Naive thymus-derived CD4-positive, alpha-beta T cell (primary cell): ENCODE measurements at regions of chr10 and their contacts with region 1.

Region 1: GRCh38 chr10:128069351-128070051 is 56.7 kb downstream of the MKI67 start:
- DNase-seq: peak; percentile 56 to 81 (median 76)
- ATAC-seq: peak; percentile 66
- H3K4me3 ChIP-seq: no peak overlapping the region
- H3K4me3 Mint-ChIP-seq: no peak overlapping the region
- H3K27ac ChIP-seq: no peak overlapping the region
- H3K27ac Mint-ChIP-seq: peak overlapping the region in 4 of 9 donors; percentile 45 to 65 (median 54)
- H3K4me1 ChIP-seq: peaks cover 16 to 19% of the 10 kb centered on the region in 2 donors
- H3K4me1 Mint-ChIP-seq: peaks cover 31 to 50% (median 37%) of the 10 kb centered on the region in 7 donors
- H3K27me3 ChIP-seq: no peaks in the 10 kb centered on the region
- H3K27me3 Mint-ChIP-seq: no peaks in the 10 kb centered on the region

Region 2: GRCh38 chr10:127834221-127834620 is 235.3 kb before region 1 on chr10:
- CTCF ChIA-PET with region 1: no interaction called
- POLR2A ChIA-PET with region 1: no interaction called
- intact Hi-C with region 1: no loop called
- DNase-seq: no peak
- ATAC-seq: no peak
- H3K4me3 ChIP-seq: no peak overlapping the region
- H3K4me3 Mint-ChIP-seq: no peak overlapping the region
- H3K27ac ChIP-seq: no peak overlapping the region
- H3K27ac Mint-ChIP-seq: no peak overlapping the region
- H3K4me1 ChIP-seq: no peaks in the 10 kb centered on the region
- H3K4me1 Mint-ChIP-seq: no peaks in the 10 kb centered on the region
- H3K27me3 ChIP-seq: no peaks in the 10 kb centered on the region
- H3K27me3 Mint-ChIP-seq: peaks cover 3 to 31% (median 23%) of the 10 kb centered on the region in 5 donors

Region 3: DNA sequence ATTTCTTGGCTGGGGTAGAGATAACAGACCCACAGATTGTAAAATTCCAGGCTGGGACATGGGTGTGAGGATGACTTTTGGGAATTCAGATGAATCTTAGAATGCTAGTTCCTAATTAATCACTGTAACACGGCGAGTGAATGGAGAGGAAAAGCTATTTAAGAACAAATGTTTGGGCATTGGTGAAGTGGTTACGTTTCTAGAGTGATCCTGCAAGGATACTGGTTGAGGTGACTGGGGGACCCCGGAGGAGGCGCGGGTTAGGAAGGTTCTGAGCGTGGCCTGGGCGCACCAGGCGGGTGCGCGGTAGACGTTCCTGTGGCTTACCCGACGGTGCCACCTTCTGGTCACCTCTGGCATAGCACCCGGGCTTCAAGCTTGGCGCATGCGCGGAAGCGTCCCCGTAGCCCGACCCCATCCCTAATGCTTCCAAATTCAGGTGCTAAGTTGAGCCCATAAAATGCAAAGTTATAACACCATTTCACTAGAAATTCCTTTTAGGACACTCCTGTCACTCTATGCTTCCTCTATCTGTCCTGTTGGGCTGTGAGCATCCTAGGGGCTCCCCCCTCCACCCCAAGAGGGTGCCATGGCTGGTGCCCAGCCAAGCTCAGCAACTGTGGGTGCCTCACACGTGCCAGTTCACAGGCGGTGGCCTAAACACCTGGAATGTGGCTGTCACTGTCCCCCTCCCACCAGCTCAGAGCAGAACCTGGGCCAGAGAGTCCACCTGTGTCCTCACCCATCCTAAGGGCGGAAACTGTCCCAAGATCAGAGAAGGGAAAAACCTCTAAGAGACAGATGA is 58.1 kb before region 1 on chr10:
- CTCF ChIA-PET with region 1: interaction called, 6 read pairs
- POLR2A ChIA-PET with region 1: no interaction called
- intact Hi-C with region 1: loop called (anchors 1 kb)
- DNase-seq: peak; percentile 72 to 97 (median 88)
- ATAC-seq: peak; percentile 100
- H3K4me3 ChIP-seq: no peak overlapping the region
- H3K4me3 Mint-ChIP-seq: peak overlapping the region in 8 of 10 donors; percentile 2 to 62 (median 31)
- H3K27ac ChIP-seq: no peak overlapping the region
- H3K27ac Mint-ChIP-seq: peak overlapping the region in 3 of 9 donors; percentile 27 to 62 (median 48)
- H3K4me1 ChIP-seq: no peaks in the 10 kb centered on the region
- H3K4me1 Mint-ChIP-seq: peaks cover 0 to 8% (median 6%) of the 10 kb centered on the region in 7 donors
- H3K27me3 ChIP-seq: no peaks in the 10 kb centered on the region
- H3K27me3 Mint-ChIP-seq: peaks cover 0 to 5% (median 0%) of the 10 kb centered on the region in 5 donors

Region 4: GRCh38 chr10:128047351-128047750 is 22.1 kb before region 1 on chr10:
- CTCF ChIA-PET with region 1: interaction called, 17 read pairs
- POLR2A ChIA-PET with region 1: interaction called, 78 read pairs
- intact Hi-C with region 1: loop called (anchors 1 kb)
- DNase-seq: peak; percentile 57 to 84 (median 80)
- ATAC-seq: peak; percentile 96
- H3K4me3 ChIP-seq: peak overlapping the region; percentile 60
- H3K4me3 Mint-ChIP-seq: peak overlapping the region; percentile 88 to 98 (median 96)
- H3K27ac ChIP-seq: peak overlapping the region; percentile 82
- H3K27ac Mint-ChIP-seq: peak overlapping the region; percentile 77 to 98 (median 95)
- H3K4me1 ChIP-seq: peaks cover 28 to 37% of the 10 kb centered on the region in 2 donors
- H3K4me1 Mint-ChIP-seq: peaks cover 13 to 72% (median 52%) of the 10 kb centered on the region in 7 donors
- H3K27me3 ChIP-seq: no peaks in the 10 kb centered on the region
- H3K27me3 Mint-ChIP-seq: no peaks in the 10 kb centered on the region

Region 5: DNA sequence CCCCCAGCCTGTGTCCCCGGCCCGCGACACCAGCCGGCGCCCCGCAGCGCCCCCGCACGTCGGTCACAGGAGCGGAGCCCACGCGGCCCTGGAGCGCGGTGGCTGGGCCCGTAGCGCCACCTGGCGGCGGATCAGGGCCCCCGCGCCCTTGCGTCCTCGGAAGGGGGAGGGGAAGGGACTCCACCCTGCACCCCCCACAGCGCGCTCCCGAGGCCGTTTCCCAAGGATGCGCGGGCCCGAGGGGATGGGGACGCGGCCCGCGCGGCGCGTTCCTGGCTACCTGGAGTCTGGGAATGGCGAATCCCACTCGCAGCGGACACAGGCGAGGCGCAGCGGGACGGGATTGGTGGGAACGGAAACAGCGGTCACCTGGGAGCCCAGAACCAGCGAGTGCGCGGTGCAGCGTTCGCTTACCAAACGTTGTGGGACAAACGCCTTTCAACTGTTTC is 80.6 kb after region 1 on chr10:
- CTCF ChIA-PET with region 1: interaction called, 11 read pairs
- POLR2A ChIA-PET with region 1: interaction called, 3 read pairs
- intact Hi-C with region 1: no loop called
- DNase-seq: peak; percentile 71 to 89 (median 83)
- ATAC-seq: peak; percentile 99
- H3K4me3 ChIP-seq: peak overlapping the region; percentile 79
- H3K4me3 Mint-ChIP-seq: peak overlapping the region; percentile 32 to 77 (median 60)
- H3K27ac ChIP-seq: no peak overlapping the region
- H3K27ac Mint-ChIP-seq: peak overlapping the region in 1 of 9 donors; percentile 14
- H3K4me1 ChIP-seq: no peaks in the 10 kb centered on the region
- H3K4me1 Mint-ChIP-seq: peaks cover 0 to 16% (median 3%) of the 10 kb centered on the region in 7 donors
- H3K27me3 ChIP-seq: no peaks in the 10 kb centered on the region
- H3K27me3 Mint-ChIP-seq: peaks cover 0 to 26% (median 0%) of the 10 kb centered on the region in 5 donors

Region 6: DNA sequence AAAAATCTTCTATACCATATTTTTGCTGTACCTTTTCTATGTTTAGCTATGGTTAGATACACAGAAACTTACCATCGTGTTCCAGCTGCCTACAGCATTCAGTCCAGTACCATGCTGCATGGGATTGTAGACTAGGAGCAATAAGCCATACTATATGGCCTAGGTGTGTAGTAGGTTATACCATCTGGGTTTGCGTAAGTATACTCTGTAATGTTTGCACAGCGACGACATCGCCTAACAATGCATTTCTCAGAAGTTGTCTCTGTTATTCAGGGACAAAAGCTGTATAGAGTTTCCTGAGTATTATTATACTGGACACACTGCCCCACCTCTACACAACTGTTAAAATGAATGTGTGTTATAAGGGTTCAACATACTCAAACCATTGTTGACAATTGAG is 150.5 kb after region 1 on chr10:
- CTCF ChIA-PET with region 1: no interaction called
- POLR2A ChIA-PET with region 1: no interaction called
- intact Hi-C with region 1: no loop called
- DNase-seq: no peak
- ATAC-seq: no peak
- H3K4me3 ChIP-seq: no peak overlapping the region
- H3K4me3 Mint-ChIP-seq: no peak overlapping the region
- H3K27ac ChIP-seq: no peak overlapping the region
- H3K27ac Mint-ChIP-seq: no peak overlapping the region
- H3K4me1 ChIP-seq: no peaks in the 10 kb centered on the region
- H3K4me1 Mint-ChIP-seq: peaks cover 11 to 17% (median 12%) of the 10 kb centered on the region in 7 donors
- H3K27me3 ChIP-seq: no peaks in the 10 kb centered on the region
- H3K27me3 Mint-ChIP-seq: peaks cover under 1 to 28% (median 7%) of the 10 kb centered on the region in 5 donors